IMR-90 (cell line): ENCODE measurements at regions of chr18 and their contacts with region 1.

Region 1: GRCh38 chr18:45384137-45384961 is 230.9 kb upstream of the SLC14A2 start:
- DNase-seq: peak; percentile 35
- ATAC-seq: peak; percentile 70
- H3K4me3 ChIP-seq: no peak overlapping the region
- H3K27ac ChIP-seq: no peak overlapping the region
- H3K4me1 ChIP-seq: no peaks in the 10 kb centered on the region; the same call in 1 of the 2 replicates
- H3K27me3 ChIP-seq: peaks cover 7% of the 10 kb centered on the region; the same call in 1 of the 2 replicates
- CTCF ChIP-seq: peak; percentile 56
- POLR2A ChIP-seq: no peak
- RAD21 ChIP-seq: peak; percentile 57

Region 2: DNA sequence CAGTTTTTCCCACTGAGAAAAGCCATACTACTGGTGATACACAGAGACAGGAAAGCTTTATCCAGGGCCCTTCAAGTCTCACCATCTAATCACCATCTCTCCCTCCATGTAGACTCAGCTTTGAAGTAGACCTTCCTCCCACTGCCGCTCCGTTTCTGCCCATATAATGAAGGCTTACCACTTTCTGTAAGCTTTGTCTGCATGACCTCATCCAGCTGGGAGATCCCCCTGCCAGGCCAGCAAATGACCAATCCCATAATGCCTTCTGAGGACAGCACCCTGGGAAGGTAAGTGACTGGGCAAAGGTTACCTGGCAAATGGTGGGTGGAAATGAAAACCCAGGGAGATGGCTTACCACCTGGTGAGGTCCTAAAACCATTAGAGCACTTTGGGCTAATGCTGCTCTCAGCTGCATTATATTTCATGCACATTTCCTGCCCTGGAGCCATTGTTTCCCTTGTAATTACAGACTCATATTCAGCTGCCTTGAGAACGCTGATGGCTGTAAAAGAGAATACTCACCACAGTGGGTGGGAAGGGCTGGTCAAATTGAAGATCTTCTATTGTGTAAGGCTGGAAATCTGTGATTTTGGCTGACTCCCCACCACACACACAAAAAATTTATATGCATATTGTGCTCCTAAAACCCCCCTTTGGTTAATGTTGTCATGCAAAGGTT is 1756.4 kb before region 1 on chr18:
- CTCF ChIA-PET with region 1: no interaction called
- POLR2A ChIA-PET with region 1: no interaction called
- dilution Hi-C with region 1: no loop called
- in situ Hi-C with region 1: loop called (anchors 25 kb)
- intact Hi-C with region 1: loop called (anchors 5 kb)
- DNase-seq: no peak
- ATAC-seq: no peak
- H3K4me3 ChIP-seq: no peak overlapping the region
- H3K27ac ChIP-seq: no peak overlapping the region
- H3K4me1 ChIP-seq: no peaks in the 10 kb centered on the region
- H3K27me3 ChIP-seq: no peaks in the 10 kb centered on the region
- CTCF ChIP-seq: no peak
- POLR2A ChIP-seq: no peak
- RAD21 ChIP-seq: no peak

Region 3: GRCh38 chr18:44130376-44130942 is 1253.9 kb before region 1 on chr18:
- CTCF ChIA-PET with region 1: no interaction called
- POLR2A ChIA-PET with region 1: no interaction called
- dilution Hi-C with region 1: no loop called
- in situ Hi-C with region 1: no loop called
- intact Hi-C with region 1: loop called (anchors 10 kb)
- DNase-seq: peak; percentile 3
- ATAC-seq: no peak
- H3K4me3 ChIP-seq: no peak overlapping the region
- H3K27ac ChIP-seq: no peak overlapping the region
- H3K4me1 ChIP-seq: no peaks in the 10 kb centered on the region
- H3K27me3 ChIP-seq: no peaks in the 10 kb centered on the region
- CTCF ChIP-seq: peak; percentile 21
- POLR2A ChIP-seq: no peak
- RAD21 ChIP-seq: peak; percentile 39; the same call in 1 of the 2 replicates

Region 4: DNA sequence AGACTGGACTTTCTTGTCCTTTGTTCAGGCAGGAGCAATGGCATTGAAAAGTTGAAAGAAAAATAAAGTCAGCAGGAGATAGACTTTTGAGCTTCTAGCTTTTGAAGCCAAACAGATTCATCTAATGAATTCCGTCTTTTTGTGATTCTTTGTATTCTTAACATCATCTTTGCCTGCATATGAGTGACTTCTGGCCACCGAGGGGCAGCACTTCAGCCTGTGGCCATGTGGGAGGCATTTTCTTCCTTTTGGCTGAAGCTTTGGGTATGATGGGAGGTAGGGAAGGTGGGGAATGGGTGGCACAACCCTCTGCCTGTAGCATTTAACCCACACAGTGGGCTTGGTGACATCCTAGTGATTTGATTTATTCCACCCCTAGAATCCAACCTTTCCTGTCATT is 483.1 kb before region 1 on chr18:
- CTCF ChIA-PET with region 1: no interaction called
- POLR2A ChIA-PET with region 1: no interaction called
- dilution Hi-C with region 1: no loop called
- in situ Hi-C with region 1: no loop called
- intact Hi-C with region 1: loop called (anchors 5 kb)
- DNase-seq: no peak
- ATAC-seq: no peak
- H3K4me3 ChIP-seq: no peak overlapping the region
- H3K27ac ChIP-seq: no peak overlapping the region
- H3K4me1 ChIP-seq: no peaks in the 10 kb centered on the region
- H3K27me3 ChIP-seq: no peaks in the 10 kb centered on the region
- CTCF ChIP-seq: 0 out of 2 replicates have a peak, but pooled peaks have one; percentile 12
- POLR2A ChIP-seq: no peak
- RAD21 ChIP-seq: no peak

Region 5: DNA sequence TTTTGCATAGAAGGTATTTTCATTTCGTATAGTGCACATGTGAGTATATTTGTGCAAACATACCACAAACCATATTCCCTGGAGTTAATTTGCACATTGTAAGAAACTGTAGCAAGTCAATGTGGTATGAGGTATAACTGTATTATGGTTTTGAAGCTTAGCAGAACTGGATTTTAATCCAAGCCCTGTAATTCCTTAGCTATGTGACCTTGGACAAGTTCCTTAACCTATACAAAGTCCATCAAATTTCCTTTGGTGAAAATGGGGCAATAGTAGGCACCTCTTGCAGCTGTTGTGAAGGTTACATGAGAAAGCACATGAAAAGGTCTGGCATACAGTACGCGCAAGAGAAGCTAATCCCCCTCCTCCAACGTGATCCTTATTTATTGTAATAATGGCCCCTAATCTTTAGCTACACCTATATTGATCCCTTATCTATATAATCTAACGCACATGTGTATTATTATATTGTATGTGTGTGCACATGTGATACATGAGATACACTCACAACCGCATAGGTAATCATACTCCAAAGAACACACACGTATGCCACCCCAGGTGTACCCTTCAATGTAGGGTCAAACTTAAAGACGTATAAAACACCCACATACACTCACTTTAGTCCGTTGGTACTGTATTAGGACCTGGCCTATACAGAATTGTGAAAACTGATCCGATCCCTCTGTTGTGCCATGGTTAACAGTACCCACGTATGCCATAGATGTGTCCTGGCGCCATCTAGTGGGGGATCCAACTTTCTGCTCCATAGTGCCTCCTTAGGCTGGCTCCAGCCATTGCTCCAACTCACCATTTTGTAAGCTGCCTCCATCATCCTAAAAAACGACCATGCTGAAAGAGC is 171.9 kb before region 1 on chr18:
- CTCF ChIA-PET with region 1: interaction called, 5 read pairs
- POLR2A ChIA-PET with region 1: interaction called, 3 read pairs
- dilution Hi-C with region 1: no loop called
- in situ Hi-C with region 1: no loop called
- intact Hi-C with region 1: loop called (anchors 10 kb)
- DNase-seq: peak; percentile 74
- ATAC-seq: peak; percentile 95
- H3K4me3 ChIP-seq: no peak overlapping the region
- H3K27ac ChIP-seq: no peak overlapping the region
- H3K4me1 ChIP-seq: no peaks in the 10 kb centered on the region
- H3K27me3 ChIP-seq: peaks cover 2% of the 10 kb centered on the region
- CTCF ChIP-seq: peak; percentile 100
- POLR2A ChIP-seq: 0 out of 2 replicates have a peak, but pooled peaks have one; percentile 37
- RAD21 ChIP-seq: peak; percentile 94

Region 6: GRCh38 chr18:45335282-45336043 is 48.9 kb before region 1 on chr18:
- CTCF ChIA-PET with region 1: no interaction called
- POLR2A ChIA-PET with region 1: no interaction called
- dilution Hi-C with region 1: no loop called
- in situ Hi-C with region 1: no loop called
- intact Hi-C with region 1: no loop called
- DNase-seq: no peak
- ATAC-seq: no peak
- H3K4me3 ChIP-seq: no peak overlapping the region
- H3K27ac ChIP-seq: no peak overlapping the region
- H3K4me1 ChIP-seq: no peaks in the 10 kb centered on the region
- H3K27me3 ChIP-seq: peaks cover 5% of the 10 kb centered on the region; the same call in 1 of the 2 replicates
- CTCF ChIP-seq: no peak
- POLR2A ChIP-seq: no peak
- RAD21 ChIP-seq: no peak

Region 7: DNA sequence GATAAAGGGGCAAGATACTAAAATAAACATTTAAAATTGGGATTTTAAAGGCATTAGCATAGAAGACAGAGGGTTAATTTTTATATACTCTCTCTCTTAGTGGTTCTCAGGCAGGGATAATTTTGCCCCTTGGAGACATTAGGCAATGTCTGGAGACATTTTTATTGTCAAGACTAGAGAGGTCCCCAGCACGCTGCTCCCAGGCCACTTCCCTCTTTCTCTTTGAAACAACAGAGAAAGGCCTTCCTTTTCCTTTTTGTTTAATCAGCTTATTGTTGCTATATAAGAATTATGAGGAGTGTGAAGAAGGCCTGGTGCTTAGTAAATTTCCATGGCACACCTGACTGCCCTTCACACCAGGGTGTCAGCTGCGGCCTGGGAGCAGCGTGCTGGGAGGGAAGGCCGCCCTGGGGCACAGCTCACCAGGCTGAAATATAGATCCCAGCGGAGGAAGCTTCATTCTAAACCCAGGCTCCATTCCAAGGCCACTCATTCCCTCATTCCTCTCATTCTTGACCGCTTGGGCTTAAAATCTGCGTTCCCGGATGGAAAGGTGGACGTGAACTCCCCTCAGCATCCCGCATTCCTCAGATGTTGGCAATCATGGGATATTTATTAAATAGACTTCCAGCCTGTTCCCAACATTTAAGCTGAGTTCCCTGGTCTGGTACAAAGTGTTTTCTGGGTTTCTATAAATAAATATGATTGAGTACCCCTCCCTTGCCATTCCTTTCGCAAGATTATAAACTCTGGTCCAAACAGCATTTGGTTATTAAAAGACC is 253.4 kb after region 1 on chr18:
- CTCF ChIA-PET with region 1: no interaction called
- POLR2A ChIA-PET with region 1: no interaction called
- dilution Hi-C with region 1: no loop called
- in situ Hi-C with region 1: no loop called
- intact Hi-C with region 1: no loop called
- DNase-seq: no peak
- ATAC-seq: peak; percentile 49
- H3K4me3 ChIP-seq: no peak overlapping the region
- H3K27ac ChIP-seq: no peak overlapping the region
- H3K4me1 ChIP-seq: no peaks in the 10 kb centered on the region
- H3K27me3 ChIP-seq: peaks cover 47% of the 10 kb centered on the region
- CTCF ChIP-seq: no peak
- POLR2A ChIP-seq: no peak
- RAD21 ChIP-seq: no peak